Heart right ventricle (tissue), 16 donors: ENCODE measurements at regions of chr7 and their contacts with region 1.

Region 1: DNA sequence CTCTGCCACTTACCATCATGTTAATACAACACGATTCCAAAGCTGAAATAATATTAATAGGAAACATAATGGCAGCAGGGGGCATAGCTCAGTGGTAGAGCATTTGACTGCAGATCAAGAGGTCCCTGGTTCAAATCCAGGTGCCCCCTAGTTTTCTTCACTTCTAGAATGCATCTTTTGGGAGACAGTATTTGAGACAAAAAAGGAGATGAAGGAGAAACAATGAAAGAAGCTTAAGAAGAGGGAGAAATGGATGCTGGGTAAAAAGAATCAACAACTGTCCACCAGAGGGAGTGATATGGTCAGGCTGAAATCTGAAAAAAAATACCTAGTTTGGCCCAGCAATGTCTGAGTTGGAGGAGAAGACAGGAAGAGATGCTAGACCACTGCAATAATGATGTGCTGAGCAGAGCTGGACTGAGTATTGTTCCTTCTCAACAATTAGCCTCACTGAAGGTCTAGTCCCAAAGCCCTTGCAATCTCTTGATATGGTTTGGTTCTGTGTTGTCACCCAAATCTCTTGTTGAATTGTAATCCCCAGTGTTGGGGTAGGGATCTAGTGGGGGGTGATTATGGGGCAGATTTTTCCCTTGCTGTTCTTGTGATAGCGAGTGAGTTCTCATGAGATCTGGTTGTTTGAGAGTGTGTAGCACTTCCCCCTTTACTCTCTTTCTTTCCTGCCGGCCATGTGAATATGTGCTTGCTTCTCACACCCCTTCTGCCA is 48.3 kb downstream of the ZNF783 start:
- DNase-seq: no peak
- ATAC-seq: peak in 2 of 8 donors; percentile 38 to 45
- H3K4me3 ChIP-seq: no peak overlapping the region
- H3K27ac ChIP-seq: no peak overlapping the region
- H3K4me1 ChIP-seq: no peaks in the 10 kb centered on the region
- H3K27me3 ChIP-seq: no peaks in the 10 kb centered on the region
- CTCF ChIP-seq: peak in 7 of 9 donors; percentile 37 to 61 (median 54)

Region 2: GRCh38 chr7:149284850-149285626 is 25.2 kb before region 1 on chr7:
- intact Hi-C with region 1: no loop called
- DNase-seq: peak; percentile 94 to 96
- ATAC-seq: peak; percentile 97 to 99 (median 98)
- H3K4me3 ChIP-seq: peak overlapping the region; percentile 52 to 78 (median 70)
- H3K27ac ChIP-seq: peak overlapping the region in 5 of 10 donors; percentile 44 to 64 (median 56)
- H3K4me1 ChIP-seq: peaks cover 0 to 18% (median 8%) of the 10 kb centered on the region in 9 donors
- H3K27me3 ChIP-seq: no peaks in the 10 kb centered on the region
- CTCF ChIP-seq: peak in 2 of 9 donors; percentile 13 to 21

Region 3: GRCh38 chr7:151181011-151181431 is 1870.7 kb after region 1 on chr7:
- intact Hi-C with region 1: loop called in 1 of 10 experiments (anchors 10 kb)
- DNase-seq: no peak
- ATAC-seq: peak in 1 of 8 donors; percentile 17
- H3K4me3 ChIP-seq: no peak overlapping the region
- H3K27ac ChIP-seq: no peak overlapping the region
- H3K4me1 ChIP-seq: peaks cover 0 to 12% (median 0%) of the 10 kb centered on the region in 9 donors
- H3K27me3 ChIP-seq: peaks cover 0 to 6% (median 2%) of the 10 kb centered on the region in 7 donors
- CTCF ChIP-seq: no peak